Activated T-helper 1 cell treated with anti-CD3 and anti-CD28 coated beads, Interleukin-12 subunit alpha, Interleukin-12 subunit beta, Interleukin-2, Interleukin-4 antibody, amounts not matched to agents 30 ng/mL and 10 ng/mL and 1 ng/mL, durations not matched to agents 14 hours and 24 hours and 36 hours (primary cell): ENCODE measurements at regions of chr3 and their contacts with region 1.

Region 1: GRCh38 chr3:120245386-120245785 is 39.6 kb downstream of the GPR156 start:
- DNase-seq: no peak
- H3K4me3 Mint-ChIP-seq: no peak overlapping the region
- H3K27ac Mint-ChIP-seq: no peak overlapping the region
- H3K4me1 Mint-ChIP-seq: no peaks in the 10 kb centered on the region
- H3K27me3 Mint-ChIP-seq: peaks cover 26% of the 10 kb centered on the region

Region 2: GRCh38 chr3:120258009-120258408 is 12.6 kb after region 1 on chr3:
- intact Hi-C with region 1: no loop called
- DNase-seq: no peak
- H3K4me3 Mint-ChIP-seq: no peak overlapping the region
- H3K27ac Mint-ChIP-seq: no peak overlapping the region
- H3K4me1 Mint-ChIP-seq: no peaks in the 10 kb centered on the region
- H3K27me3 Mint-ChIP-seq: peaks cover 4% of the 10 kb centered on the region

Region 3: DNA sequence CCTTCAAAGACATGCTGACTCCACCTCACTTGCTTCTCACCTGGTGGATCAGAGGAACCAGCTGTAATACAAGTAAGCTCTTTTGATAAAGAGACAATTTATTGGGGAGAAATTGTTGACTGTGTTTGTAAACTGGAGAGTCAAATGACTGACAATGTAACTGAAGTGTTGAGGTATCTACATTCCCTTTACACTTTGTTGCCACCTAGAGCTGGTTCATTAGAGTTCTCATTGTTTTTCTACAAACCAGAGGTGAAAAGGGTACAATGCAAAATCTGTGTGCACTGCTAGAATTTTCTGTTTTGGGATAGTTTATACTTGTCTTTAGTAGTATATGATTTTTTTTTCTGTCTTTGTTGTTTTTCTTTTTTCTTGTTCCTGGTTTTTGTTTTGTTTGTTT is 112.4 kb after region 1 on chr3:
- intact Hi-C with region 1: loop called (anchors 1 kb)
- DNase-seq: no peak
- H3K4me3 Mint-ChIP-seq: no peak overlapping the region
- H3K27ac Mint-ChIP-seq: no peak overlapping the region
- H3K4me1 Mint-ChIP-seq: no peaks in the 10 kb centered on the region
- H3K27me3 Mint-ChIP-seq: peaks cover 54% of the 10 kb centered on the region